ENCODE measurements at regions of chr2 and their contacts with region 1.

Region 1: GRCh38 chr2:158456309-158457066 is at the starts of genes CCDC148 and PKP4:
- DNase-seq: peak; percentile 94
- H3K4me3 ChIP-seq: peak within 1 kb of the TSS; percentile 60 to 99 (median 79)
- H3K27ac ChIP-seq: peak within 1 kb of the TSS; percentile 80 to 97 (median 96)
- H3K4me1 ChIP-seq: peaks cover 0 to 14% (median 9%) of the 10 kb centered on the region in 4 donors
- H3K27me3 ChIP-seq: no peaks in the 10 kb centered on the region
- CTCF ChIP-seq: peak in 3 of 4 experiments; percentile 16 to 57 (median 35)
- EP300 ChIP-seq: no peak
- POLR2A ChIP-seq: no peak
- total RNA-seq, gene CCDC148: 0.36 to 0.83 TPM in 2 of 4 donors, not detected in the others
- total RNA-seq, gene PKP4: 27.5 to 41.3 (median 32.3) TPM

Region 2: GRCh38 chr2:158484892-158485556 is 28.5 kb after region 1 on chr2:
- intact Hi-C with region 1: no loop called
- DNase-seq: no peak
- H3K4me3 ChIP-seq: no peak overlapping the region
- H3K27ac ChIP-seq: no peak overlapping the region
- H3K4me1 ChIP-seq: peaks cover 0 to 24% (median 19%) of the 10 kb centered on the region in 4 donors
- H3K27me3 ChIP-seq: no peaks in the 10 kb centered on the region
- CTCF ChIP-seq: no peak
- EP300 ChIP-seq: no peak
- POLR2A ChIP-seq: no peak

Region 3: GRCh38 chr2:158507166-158507565 is 50.7 kb after region 1 on chr2:
- intact Hi-C with region 1: no loop called
- DNase-seq: no peak
- H3K4me3 ChIP-seq: no peak overlapping the region
- H3K27ac ChIP-seq: no peak overlapping the region
- H3K4me1 ChIP-seq: peaks cover 0 to 12% (median 4%) of the 10 kb centered on the region in 4 donors
- H3K27me3 ChIP-seq: no peaks in the 10 kb centered on the region
- CTCF ChIP-seq: no peak
- EP300 ChIP-seq: no peak
- POLR2A ChIP-seq: no peak

Region 4: GRCh38 chr2:158546412-158547144 is 90.1 kb after region 1 on chr2:
- intact Hi-C with region 1: no loop called
- DNase-seq: no peak
- H3K4me3 ChIP-seq: no peak overlapping the region
- H3K27ac ChIP-seq: no peak overlapping the region
- H3K4me1 ChIP-seq: no peaks in the 10 kb centered on the region
- H3K27me3 ChIP-seq: no peaks in the 10 kb centered on the region
- CTCF ChIP-seq: no peak
- EP300 ChIP-seq: no peak
- POLR2A ChIP-seq: no peak

Region 5: GRCh38 chr2:158753641-158754611 is 297.4 kb after region 1 on chr2:
- intact Hi-C with region 1: loop called (anchors 5 kb)
- DNase-seq: no peak
- H3K4me3 ChIP-seq: peak overlapping the region in 2 of 4 donors; percentile 26 to 31
- H3K27ac ChIP-seq: no peak overlapping the region
- H3K4me1 ChIP-seq: peaks cover 0 to 10% (median 6%) of the 10 kb centered on the region in 4 donors
- H3K27me3 ChIP-seq: no peaks in the 10 kb centered on the region
- CTCF ChIP-seq: peak; percentile 56 to 90 (median 82)
- EP300 ChIP-seq: no peak
- POLR2A ChIP-seq: no peak